Mucosa of descending colon (tissue), 3 donors: ENCODE measurements at regions of chr3 and their contacts with region 1.

Region 1: GRCh38 chr3:177597311-177598096 is 400.2 kb upstream of the TBL1XR1 start:
- DNase-seq: peak in 1 of 3 donors; percentile 49
- ATAC-seq: peak; percentile 66
- H3K4me3 ChIP-seq: no peak overlapping the region
- H3K4me1 ChIP-seq: peaks cover 11% of the 10 kb centered on the region
- CTCF ChIP-seq: no peak

Region 2: DNA sequence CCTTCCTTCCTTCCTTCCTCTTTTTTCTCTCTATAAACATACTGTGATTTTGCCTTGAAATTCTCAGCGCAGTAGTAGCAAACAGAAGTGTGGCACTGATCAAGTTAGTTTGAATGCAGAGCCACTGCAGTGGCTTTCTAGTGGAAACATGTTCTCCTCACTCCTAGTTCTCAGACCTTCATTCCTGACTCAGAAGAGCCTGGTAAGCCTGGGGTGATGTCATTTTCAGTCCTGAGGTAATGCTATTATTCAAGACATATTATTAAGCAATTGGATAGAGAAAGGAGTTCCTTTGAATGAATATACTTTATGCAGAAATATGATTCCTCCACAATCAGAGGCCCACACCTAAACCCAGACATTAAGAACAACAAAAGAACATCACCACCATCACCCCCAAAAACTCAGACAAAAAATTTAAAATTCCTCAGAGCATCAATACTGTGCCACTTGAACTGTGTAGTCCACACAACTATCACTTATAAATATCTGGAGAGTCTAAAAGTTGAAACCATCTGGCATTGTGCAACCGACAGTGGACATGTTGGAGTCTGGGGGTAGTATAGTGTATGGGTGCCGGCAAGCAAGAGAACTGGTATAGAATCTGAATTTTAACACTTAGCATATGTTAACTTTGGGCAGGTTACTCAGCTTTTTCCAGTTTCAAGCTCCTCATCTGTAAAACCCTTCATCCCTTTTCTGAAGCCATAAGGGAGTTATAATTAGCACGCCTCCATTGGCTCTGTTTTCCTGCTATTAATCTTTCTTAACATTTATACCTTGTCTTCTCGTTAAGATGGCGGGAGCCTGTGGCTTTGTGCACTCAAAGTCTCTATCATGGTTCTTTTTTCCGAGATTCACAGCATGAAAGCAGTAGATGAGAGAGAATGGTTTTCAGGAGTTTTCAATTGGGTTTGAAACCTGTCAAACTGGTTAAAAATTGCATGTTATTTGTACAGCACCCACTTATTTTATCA is 144.7 kb before region 1 on chr3:
- intact Hi-C with region 1: loop called in 1 of 2 experiments (anchors 10 kb)
- DNase-seq: no peak
- ATAC-seq: no peak
- H3K4me3 ChIP-seq: no peak overlapping the region
- H3K4me1 ChIP-seq: no peaks in the 10 kb centered on the region
- CTCF ChIP-seq: no peak

Region 3: GRCh38 chr3:177705976-177706823 is 108.7 kb after region 1 on chr3:
- intact Hi-C with region 1: no loop called
- DNase-seq: peak in 1 of 3 donors; percentile 10
- ATAC-seq: no peak
- H3K4me3 ChIP-seq: no peak overlapping the region
- H3K4me1 ChIP-seq: no peaks in the 10 kb centered on the region
- CTCF ChIP-seq: no peak